HAP-1 (cell line): ENCODE measurements at regions of chr1 and their contacts with region 1.

Region 1: DNA sequence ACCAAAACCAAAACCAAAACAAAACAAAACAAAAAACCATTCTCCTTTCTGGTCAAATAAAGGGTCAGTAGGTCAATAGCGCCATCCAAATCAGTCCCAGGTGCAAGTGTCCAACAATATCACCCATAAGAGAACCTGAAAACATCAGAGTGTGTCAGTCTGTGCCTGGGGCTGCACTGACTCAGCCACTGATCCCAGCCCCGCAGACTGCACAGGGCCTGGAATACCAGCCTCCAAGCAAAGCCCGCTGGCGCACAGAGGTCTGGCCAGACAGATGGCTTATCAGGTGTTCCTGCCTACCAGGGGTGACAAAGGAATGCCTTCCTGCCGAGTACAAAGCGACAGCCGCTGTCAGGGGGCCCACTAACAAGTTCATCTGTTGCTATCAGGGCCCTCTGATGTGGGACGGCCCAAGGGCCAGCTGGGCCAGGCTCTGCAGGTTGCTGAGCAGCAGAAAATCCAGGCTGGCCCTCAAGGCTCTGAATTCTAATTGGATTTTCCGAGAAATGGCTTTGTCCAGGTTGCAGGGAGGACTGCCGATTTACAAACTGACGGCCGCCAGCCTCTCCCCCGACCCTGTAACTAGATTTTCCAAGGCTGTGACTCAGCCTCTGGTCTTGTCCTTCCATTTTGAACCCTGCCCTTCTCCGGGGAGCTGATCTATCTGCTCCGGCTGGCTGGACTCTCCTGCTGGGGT is 13.7 kb upstream of the TMEM51 start:
- DNase-seq: no peak
- H3K4me3 ChIP-seq: no peak overlapping the region
- H3K4me1 ChIP-seq: no peaks in the 10 kb centered on the region; the same call in 1 of the 2 replicates
- H3K27me3 ChIP-seq: no peaks in the 10 kb centered on the region; the same call in 1 of the 2 replicates

Region 2: DNA sequence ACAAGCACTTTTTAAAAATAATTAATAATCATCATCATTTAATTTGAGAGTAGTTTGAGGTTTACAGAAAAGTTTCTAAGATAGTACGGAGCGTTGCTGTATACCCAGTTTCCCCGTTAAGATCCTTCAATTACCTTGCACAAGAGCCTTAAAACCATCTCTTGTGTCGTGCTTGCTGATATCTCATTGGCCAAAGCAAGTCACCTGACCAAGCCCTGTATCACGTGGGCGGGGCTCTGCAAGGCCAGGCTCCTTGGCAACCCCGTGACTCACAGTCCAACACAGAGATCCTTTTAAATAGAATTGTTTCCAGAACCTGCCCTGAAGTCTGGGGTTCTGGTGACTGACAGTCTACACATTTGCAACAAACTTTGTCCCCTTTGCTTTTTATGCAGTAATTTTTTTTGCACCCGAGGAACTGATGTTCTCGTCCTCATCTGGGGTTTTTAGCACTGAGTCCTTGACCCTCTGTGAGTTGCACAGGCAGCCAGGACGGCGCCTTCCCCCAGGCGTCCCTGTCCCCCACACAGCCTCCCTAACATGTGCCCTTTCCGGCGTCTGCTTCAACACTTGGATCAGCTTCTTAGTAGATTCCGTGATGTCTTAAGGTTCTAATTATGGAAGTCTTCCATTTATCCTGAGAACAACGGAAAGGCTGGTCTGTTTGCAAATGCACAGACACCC is 169.5 kb before region 1 on chr1:
- in situ Hi-C with region 1: no loop called
- DNase-seq: peak; percentile 10 to 71
- H3K4me3 ChIP-seq: no peak overlapping the region
- H3K4me1 ChIP-seq: no peaks in the 10 kb centered on the region
- H3K27me3 ChIP-seq: no peaks in the 10 kb centered on the region

Region 3: GRCh38 chr1:15083578-15083977 is 56.2 kb before region 1 on chr1:
- in situ Hi-C with region 1: no loop called
- DNase-seq: no peak
- H3K4me3 ChIP-seq: no peak overlapping the region
- H3K4me1 ChIP-seq: no peaks in the 10 kb centered on the region
- H3K27me3 ChIP-seq: no peaks in the 10 kb centered on the region

Region 4: DNA sequence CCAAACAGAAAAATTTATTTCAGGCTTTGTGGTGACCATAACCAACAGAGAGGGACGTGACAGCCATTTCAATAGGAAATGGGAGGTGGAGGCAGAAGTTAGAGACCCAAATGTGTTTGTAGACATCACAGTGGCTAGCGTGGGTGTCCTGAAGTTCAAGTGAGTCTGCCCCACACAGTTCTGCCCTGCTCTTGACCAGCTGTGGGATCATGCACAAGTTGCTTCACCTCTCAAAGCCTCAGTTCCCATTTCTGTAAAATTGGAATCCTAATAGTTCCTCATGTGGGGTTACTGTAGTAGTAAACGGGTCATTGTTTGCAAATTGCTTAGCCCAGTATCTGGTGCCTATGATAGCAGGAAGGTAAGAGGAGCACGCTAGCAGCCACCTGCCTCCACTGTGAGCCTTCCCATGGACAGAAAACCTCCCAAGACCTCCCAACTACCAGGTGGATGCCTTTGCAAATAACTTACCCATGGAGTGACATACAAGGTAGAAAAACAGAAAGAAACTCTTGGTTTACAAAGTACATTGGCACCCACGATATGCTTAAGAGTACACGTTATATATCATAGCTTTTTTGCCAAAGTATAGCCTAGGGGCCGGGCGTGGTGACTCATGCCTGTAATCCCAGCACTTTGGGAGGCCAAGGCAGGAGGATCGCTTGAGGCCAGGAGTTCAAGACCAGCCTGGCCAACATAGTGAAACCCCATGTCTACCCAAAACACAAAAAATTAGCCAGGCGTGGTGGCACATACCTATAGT is 136.3 kb after region 1 on chr1:
- in situ Hi-C with region 1: loop called (anchors 5 kb)
- DNase-seq: no peak
- H3K4me3 ChIP-seq: no peak overlapping the region
- H3K4me1 ChIP-seq: no peaks in the 10 kb centered on the region
- H3K27me3 ChIP-seq: peaks cover 9% of the 10 kb centered on the region

Region 5: DNA sequence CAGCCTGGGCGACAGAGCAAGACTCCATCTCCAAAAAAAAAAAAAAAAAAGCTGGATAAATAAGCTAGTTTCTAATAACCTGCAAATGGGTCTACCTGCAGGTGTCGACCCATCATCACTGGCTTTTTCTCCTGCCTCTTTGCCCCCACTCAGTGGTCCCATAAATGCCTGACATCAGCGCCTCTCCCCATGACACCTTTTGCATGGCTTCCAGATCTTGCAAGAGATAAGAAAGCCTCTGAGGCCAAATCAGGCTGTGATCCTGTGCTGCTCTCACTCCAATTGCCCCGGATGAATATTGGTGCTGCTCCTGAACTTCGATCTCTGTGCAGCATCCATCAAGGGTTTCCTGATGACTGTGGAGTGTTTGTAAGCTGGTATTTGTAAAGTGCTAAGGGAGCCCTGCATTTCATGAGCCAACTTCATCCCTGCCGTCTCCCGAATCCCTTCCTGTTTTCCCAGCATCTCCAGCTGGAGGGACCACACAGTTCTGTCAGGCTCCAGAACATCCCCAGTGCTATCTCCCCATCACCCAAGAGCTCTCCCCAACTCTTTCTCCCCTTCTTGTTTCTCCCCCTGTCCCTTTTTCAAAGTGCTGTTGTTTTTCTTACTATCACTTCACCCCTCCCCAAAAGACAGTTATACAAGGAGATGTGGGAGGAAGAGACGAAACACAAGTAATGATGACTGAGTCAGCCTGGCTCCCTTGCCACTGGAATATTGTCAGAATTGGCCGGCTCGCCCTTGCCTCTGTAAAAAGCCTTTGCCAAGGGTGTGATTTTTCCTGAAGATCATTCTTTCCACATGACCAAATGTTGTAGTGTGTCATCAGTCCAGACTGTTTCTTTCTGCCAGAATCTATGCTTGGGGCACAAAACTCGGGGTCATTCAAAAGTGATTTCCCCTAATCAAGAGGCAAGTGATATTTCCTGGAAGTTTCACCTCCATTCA is 267.1 kb after region 1 on chr1:
- in situ Hi-C with region 1: no loop called
- DNase-seq: no peak
- H3K4me3 ChIP-seq: no peak overlapping the region
- H3K4me1 ChIP-seq: peaks cover 4% of the 10 kb centered on the region
- H3K27me3 ChIP-seq: no peaks in the 10 kb centered on the region

Region 6: GRCh38 chr1:15741183-15741850 is 601.5 kb after region 1 on chr1:
- in situ Hi-C with region 1: no loop called
- DNase-seq: peak; percentile 50 to 86
- H3K4me3 ChIP-seq: no peak overlapping the region
- H3K4me1 ChIP-seq: peaks cover 2% of the 10 kb centered on the region; the same call in 1 of the 2 replicates
- H3K27me3 ChIP-seq: no peaks in the 10 kb centered on the region